Activated naive CD4-positive, alpha-beta T cell treated with anti-CD3 and anti-CD28 coated beads for 36 hours (primary cell): ENCODE measurements at regions of chr1 and their contacts with region 1.

Region 1: GRCh38 chr1:6343506-6344405 is 49.8 kb downstream of the ACOT7 start:
- DNase-seq: peak; percentile 76
- H3K4me3 Mint-ChIP-seq: no peak overlapping the region
- H3K27ac Mint-ChIP-seq: no peak overlapping the region
- H3K4me1 Mint-ChIP-seq: peaks cover 10% of the 10 kb centered on the region
- H3K27me3 Mint-ChIP-seq: no peaks in the 10 kb centered on the region

Region 2: GRCh38 chr1:5565281-5566125 is 778.3 kb before region 1 on chr1:
- CTCF ChIA-PET with region 1: no interaction called
- intact Hi-C with region 1: no loop called
- DNase-seq: no peak
- H3K4me3 Mint-ChIP-seq: no peak overlapping the region
- H3K27ac Mint-ChIP-seq: no peak overlapping the region
- H3K4me1 Mint-ChIP-seq: no peaks in the 10 kb centered on the region
- H3K27me3 Mint-ChIP-seq: peaks cover 3% of the 10 kb centered on the region

Region 3: GRCh38 chr1:6325482-6325881 is 18.3 kb before region 1 on chr1:
- CTCF ChIA-PET with region 1: no interaction called
- intact Hi-C with region 1: no loop called
- DNase-seq: no peak
- H3K4me3 Mint-ChIP-seq: no peak overlapping the region
- H3K27ac Mint-ChIP-seq: no peak overlapping the region
- H3K4me1 Mint-ChIP-seq: no peaks in the 10 kb centered on the region
- H3K27me3 Mint-ChIP-seq: no peaks in the 10 kb centered on the region

Region 4: GRCh38 chr1:6359216-6360116 is 15.7 kb after region 1 on chr1:
- CTCF ChIA-PET with region 1: interaction called, 17 read pairs
- intact Hi-C with region 1: no loop called
- DNase-seq: peak; percentile 59
- H3K4me3 Mint-ChIP-seq: peak overlapping the region; percentile 39
- H3K27ac Mint-ChIP-seq: peak overlapping the region; percentile 72
- H3K4me1 Mint-ChIP-seq: peaks cover 42% of the 10 kb centered on the region
- H3K27me3 Mint-ChIP-seq: no peaks in the 10 kb centered on the region

Region 5: DNA sequence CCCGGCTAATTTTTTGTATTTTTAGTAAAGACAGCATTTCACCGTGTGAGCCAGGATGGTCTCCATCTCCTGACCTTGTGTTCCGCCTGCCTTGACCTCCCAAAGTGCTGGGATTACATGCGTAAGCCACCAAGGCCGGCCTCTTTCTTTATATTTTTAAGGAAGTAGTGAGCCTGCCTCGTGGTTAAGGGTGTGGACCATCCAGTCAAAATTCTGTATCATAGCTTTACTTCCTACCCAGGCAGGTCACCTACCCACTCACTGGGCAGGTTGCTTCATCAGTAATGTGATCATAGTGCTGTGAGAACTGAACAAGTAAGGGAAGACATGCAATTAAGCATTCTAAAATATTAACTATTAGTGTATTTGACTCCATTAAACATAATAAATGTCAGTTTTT is 57.9 kb after region 1 on chr1:
- CTCF ChIA-PET with region 1: interaction called, 28 read pairs
- intact Hi-C with region 1: loop called (anchors 1 kb)
- DNase-seq: no peak
- H3K4me3 Mint-ChIP-seq: no peak overlapping the region
- H3K27ac Mint-ChIP-seq: no peak overlapping the region
- H3K4me1 Mint-ChIP-seq: peaks cover 3% of the 10 kb centered on the region
- H3K27me3 Mint-ChIP-seq: no peaks in the 10 kb centered on the region

Region 6: GRCh38 chr1:6438047-6438525 is 94.3 kb after region 1 on chr1:
- CTCF ChIA-PET with region 1: interaction called, 7 read pairs
- intact Hi-C with region 1: loop called (anchors 2 kb)
- DNase-seq: peak; percentile 81
- H3K4me3 Mint-ChIP-seq: no peak overlapping the region
- H3K27ac Mint-ChIP-seq: no peak overlapping the region
- H3K4me1 Mint-ChIP-seq: peaks cover 3% of the 10 kb centered on the region
- H3K27me3 Mint-ChIP-seq: peaks cover 27% of the 10 kb centered on the region